GM13977 (cell line): ENCODE measurements at regions of chr17 and their contacts with region 1.

Region 1: DNA sequence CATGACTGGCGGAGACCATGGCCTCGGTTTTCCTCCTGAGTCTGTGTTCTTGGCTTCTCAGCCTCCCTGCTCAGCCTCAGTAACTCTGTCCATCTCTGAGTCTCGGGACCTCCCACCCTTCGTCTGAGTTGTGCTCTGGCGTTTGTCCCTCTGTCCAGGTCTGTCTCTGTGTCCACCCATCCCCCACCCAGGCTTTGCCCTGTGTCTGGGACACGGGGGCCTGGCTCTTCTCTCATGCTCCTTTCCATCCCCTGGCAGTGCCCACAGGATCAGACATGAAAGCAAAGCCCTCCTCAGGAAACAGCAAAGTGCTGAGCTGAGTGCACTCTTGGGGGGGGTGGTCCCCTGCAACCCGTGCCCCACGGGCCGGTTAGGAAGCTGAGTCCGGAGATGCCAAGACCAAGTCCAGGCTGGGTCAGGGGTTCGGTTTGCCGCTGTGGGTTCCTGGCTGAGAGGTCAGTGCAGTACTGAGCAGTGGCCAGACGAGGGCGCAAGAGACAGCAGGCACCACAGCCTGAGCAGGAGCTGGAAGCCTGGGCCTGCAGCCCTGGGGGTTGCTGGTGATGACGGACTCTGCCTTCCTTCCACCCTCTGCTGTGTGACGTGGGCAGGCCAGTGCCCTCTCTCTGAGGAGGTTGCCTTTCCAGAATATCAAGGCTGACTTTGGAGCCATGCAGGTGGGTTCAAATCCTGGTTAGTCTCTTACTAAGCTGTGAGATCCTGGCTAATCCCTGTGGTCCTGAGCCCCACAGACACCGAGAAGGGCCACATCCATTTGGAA is 2.5 kb downstream of the P2RX1 start:
- DNase-seq: peak; percentile 90
- CTCF ChIP-seq: peak; percentile 98

Region 2: GRCh38 chr17:3683054-3683511 is 230.6 kb before region 1 on chr17:
- in situ Hi-C with region 1: no loop called
- DNase-seq: peak; percentile 89
- CTCF ChIP-seq: peak; percentile 93

Region 3: DNA sequence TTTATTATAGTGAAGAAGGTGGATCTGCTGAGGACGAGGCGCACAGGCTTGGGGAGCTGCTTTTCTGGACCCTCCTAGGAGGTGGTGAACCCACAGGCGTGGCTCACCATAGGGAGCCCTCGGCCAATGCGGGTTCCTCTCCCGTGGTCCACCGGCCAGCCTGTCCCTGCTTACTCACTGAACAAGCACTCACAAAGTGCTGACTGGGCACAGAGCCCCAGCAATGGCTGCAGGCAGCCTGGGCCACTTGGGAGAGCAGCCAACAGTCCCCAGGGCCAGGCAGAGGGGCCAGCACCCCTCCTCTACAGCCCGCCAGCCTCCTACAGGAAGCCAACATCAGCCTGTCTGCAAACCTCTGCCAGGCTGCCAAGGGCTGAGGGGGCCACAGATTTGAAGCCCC is 48.5 kb before region 1 on chr17:
- in situ Hi-C with region 1: no loop called
- DNase-seq: no peak
- CTCF ChIP-seq: no peak

Region 4: GRCh38 chr17:3990386-3991127 is 76.8 kb after region 1 on chr17:
- in situ Hi-C with region 1: loop called (anchors 10 kb)
- DNase-seq: no peak
- CTCF ChIP-seq: no peak

Region 5: DNA sequence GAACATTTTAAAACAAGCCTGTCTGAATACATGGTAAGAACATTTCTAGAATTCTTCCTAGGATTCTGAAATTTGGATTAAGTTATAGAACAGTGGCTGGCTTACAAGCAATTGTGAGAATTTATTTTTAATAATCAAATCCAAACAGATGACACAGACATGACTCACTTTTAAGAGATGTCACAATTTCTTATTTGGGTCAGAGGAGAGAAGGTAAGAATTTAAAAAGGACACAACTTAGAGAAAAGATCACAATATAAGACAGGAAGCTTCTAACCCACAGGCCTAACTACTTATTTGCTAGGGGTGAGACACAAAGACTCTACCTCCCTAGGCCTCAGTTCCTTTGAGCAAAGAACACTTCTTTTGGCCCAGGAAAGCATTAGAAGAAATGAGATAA is 196.4 kb after region 1 on chr17:
- in situ Hi-C with region 1: no loop called
- DNase-seq: no peak
- CTCF ChIP-seq: no peak